ENCODE measurements at regions of chr4 and their contacts with region 1.

Region 1: DNA sequence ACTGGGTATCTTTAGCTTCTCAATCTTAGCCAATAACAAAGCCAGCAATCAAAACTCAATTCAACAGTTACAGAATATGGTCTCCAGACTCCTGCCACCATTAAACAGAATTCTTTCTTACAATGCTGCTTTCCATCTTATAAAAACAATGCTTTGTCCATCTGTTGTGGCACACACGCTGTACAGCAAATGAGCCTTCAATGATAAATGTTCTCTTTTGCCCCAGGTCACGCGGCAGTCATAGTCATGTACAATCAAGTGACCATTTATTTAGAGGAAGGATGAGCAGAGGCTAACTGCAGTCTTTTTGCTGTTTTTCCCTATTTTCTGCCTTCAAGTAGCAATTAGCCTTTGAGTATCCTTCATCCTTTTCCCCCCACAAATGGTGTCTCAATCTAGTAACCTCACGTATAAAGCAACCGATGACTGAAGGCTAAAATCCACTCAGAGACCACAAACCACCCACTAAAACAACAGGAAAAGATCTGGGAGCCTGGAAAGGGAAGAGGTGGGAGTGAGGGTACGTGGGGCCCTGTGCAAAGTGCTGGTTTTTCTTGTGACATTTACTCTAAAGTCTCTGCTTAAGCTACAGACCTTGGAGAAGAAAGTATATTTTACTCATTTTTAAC is 24.4 kb downstream of the TRIM2 start:
- DNase-seq: peak; percentile 50
- H3K4me3 ChIP-seq: no peak overlapping the region
- H3K27ac ChIP-seq: peak overlapping the region in 1 of 2 experiments; percentile 81; a peak in 2 of 4 replicates
- H3K4me1 ChIP-seq: peaks cover 27 to 32% of the 10 kb centered on the region in 2 experiments; a peak in 3 of 4 replicates
- H3K27me3 ChIP-seq: no peaks in the 10 kb centered on the region
- CTCF ChIP-seq: no peak
- EP300 ChIP-seq: peak in 1 of 2 experiments; percentile 40; a peak in 1 of 4 replicates
- RAD21 ChIP-seq: no peak

Region 2: GRCh38 chr4:153239409-153239808 is 10.8 kb after region 1 on chr4:
- CTCF ChIA-PET with region 1: no interaction called
- POLR2A ChIA-PET with region 1: no interaction called
- DNase-seq: no peak
- H3K4me3 ChIP-seq: no peak overlapping the region
- H3K27ac ChIP-seq: no peak overlapping the region
- H3K4me1 ChIP-seq: peaks cover 2 to 14% of the 10 kb centered on the region in 2 experiments; a peak in 2 of 4 replicates
- H3K27me3 ChIP-seq: no peaks in the 10 kb centered on the region
- CTCF ChIP-seq: no peak
- EP300 ChIP-seq: no peak
- RAD21 ChIP-seq: no peak

Region 3: GRCh38 chr4:153318696-153319320 is 90.2 kb after region 1 on chr4:
- CTCF ChIA-PET with region 1: interaction called, 11 read pairs
- POLR2A ChIA-PET with region 1: no interaction called
- DNase-seq: peak; percentile 74
- H3K4me3 ChIP-seq: no peak overlapping the region
- H3K27ac ChIP-seq: no peak overlapping the region
- H3K4me1 ChIP-seq: peaks cover 6 to 7% of the 10 kb centered on the region in 2 experiments; a peak in 2 of 4 replicates
- H3K27me3 ChIP-seq: no peaks in the 10 kb centered on the region
- CTCF ChIP-seq: peak; percentile 83
- EP300 ChIP-seq: no peak
- RAD21 ChIP-seq: peak; percentile 91